Head of caudate nucleus (tissue), 42 donors: ENCODE measurements at regions of chr3 and their contacts with region 1.

Region 1: DNA sequence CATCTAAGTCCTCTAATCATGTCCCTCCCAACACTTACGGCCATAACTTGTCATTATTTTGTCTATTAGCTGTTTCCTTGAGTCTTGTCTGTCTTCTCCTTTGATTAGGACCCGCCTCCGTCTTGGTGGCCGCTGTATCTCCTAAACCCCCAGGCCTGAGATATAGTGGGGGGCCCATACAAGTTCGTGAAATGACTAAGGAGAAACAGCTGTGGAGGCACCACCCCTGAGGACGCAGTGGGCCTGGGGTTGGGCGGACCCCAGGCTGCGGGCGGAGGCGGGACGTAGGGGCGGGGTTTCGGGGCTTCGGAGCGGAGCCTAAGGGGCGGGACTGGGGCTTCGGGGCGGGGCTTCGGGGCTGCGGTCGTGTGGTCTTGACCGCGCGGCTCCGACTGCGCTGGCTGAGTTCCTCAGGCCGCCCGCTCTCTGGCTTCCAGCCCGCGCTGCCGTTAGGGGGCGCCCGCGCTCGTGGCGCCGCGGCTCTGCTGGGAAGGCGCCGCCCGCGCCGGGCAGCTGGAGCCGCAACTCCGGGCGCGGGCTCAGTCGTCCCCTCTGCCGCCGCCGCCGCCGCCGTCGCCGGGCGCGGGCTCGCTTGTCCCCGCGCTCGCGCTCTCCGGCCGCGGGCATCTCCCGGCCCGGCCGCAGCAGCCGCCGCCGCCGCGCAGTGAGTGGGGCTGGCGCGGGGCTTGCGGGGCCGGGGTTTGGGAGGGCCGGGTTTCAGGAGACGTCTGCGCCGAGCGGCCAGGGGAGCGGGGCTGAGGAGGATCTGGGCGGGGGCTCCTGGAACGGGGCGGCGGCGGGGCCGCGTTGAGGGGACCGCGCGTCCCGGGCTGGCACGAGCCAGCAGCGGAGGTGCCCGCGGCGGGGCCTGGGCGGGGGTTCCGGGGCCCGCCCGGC is at the start of gene KCTD6:
- DNase-seq: peak; percentile 67 to 95 (median 90)

Region 2: GRCh38 chr3:57815036-57815435 is 676.7 kb before region 1 on chr3:
- intact Hi-C with region 1: no loop called
- DNase-seq: no peak

Region 3: DNA sequence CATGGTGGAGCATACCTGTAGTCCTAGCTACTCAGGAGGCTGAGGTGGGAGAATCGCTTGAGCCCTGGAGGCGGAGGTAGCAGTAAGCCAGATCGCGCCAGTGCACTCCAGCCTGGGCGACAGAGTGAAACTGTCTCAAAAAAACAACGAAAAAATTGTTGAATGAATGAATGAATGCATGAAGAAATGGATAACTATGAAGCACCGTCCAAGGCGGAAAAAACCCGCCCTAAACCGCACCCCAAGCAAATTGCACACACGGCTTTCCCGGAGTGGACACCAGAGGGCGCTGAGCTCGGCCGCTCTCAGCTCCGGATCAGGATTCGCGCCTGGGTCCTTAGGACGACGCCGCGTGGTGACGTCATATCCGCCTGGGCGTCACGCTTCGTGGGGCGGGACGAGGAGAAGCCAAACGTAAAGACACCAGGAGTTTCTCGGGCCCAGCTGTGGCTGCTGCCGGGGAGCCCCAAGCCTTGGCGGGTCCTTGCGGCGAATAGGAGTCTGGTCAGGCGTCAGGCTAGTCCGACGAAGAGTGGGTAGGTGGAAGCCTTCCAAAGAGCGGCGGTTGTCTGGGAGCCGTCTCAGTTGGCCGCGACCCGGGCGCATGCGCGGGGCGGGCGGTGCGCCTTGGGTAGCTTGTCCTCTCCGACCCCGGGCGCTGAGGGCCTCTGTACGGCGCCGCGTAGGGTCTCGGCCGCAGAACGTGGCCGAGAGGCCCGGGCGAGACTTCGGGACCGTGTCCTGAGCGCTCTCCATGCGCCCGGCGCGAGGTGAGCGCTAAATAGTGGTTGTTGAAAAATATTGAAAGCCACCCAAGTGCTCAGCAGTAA is 185.7 kb before region 1 on chr3 and contains the starts of genes HTD2 and RPP14:
- intact Hi-C with region 1: loop called (anchors 5 kb)
- DNase-seq: peak; percentile 93 to 100 (median 98)

Region 4: DNA sequence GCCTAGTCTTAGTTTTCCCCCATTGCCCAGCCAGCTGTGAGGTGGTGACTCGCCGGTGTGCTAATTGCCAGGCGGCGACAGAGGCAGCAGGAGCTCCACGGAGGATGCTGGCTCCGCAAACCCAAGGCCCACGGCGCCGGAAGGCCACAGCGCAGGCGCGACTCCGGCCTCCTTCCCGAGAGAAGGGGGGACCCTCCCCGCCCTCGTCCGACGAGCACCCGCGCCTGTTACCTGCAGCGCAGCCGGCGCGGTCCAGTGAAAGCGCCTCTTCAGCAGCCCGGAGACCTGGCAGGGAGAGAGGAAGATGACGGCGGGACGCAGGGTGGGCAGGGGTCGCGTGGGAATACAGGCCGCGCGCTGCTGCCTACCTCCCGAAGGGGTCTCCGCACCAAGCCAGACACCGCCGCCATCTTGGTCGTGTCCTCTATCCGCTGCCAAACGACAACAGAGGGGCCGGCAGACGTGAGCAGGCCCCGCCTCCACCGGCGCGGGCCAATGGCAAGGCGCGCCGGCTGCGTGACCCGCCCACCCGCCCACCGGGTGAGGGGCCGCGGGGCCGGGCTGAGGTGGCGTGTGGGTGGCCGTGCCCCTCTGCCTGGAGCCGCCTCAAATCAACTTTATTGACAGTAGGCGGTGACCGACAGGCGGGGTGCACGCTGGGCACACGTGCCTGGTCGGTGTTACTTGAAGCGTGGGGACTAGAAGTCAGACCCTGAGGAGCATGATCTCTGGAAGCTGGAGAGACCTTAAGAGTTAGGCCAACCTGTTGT is 58.2 kb before region 1 on chr3 and contains the start of gene PDHB:
- intact Hi-C with region 1: loop called (anchors 5 kb)
- DNase-seq: peak; percentile 82 to 97 (median 92)